SK-N-SH (cell line): ENCODE measurements at regions of chr11 and their contacts with region 1.

Region 1: GRCh38 chr11:74388678-74389327 is 9.4 kb downstream of the PGM2L1 start:
- DNase-seq: peak; percentile 59
- H3K4me3 ChIP-seq: no peak overlapping the region; a peak in 1 of 4 replicates
- H3K27ac ChIP-seq: no peak overlapping the region
- H3K4me1 ChIP-seq: peaks cover 3 to 9% of the 10 kb centered on the region in 2 experiments; a peak in 3 of 4 replicates
- H3K27me3 ChIP-seq: no peaks in the 10 kb centered on the region
- CTCF ChIP-seq: peak; percentile 90
- EP300 ChIP-seq: no peak
- RAD21 ChIP-seq: peak; percentile 73

Region 2: DNA sequence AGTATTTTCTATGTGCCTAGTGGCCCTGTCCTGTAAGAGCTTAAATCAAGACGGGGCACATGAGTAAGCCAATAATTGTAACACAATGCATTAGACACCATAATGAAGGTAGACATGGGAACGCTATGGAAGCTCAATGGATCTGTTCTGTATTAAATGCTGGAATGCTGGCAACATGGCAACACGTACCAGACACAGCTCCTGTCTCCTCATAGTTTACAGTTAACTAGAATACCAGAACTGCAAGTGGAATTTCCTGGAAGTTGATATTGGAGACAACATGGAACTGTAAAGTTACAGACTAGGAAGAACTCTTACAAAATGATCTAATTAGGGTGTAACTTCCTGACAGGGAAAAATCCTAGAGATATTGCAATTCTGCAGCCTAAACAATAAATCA is 89.8 kb before region 1 on chr11:
- CTCF ChIA-PET with region 1: no interaction called
- POLR2A ChIA-PET with region 1: no interaction called
- DNase-seq: no peak
- H3K4me3 ChIP-seq: no peak overlapping the region
- H3K27ac ChIP-seq: peak overlapping the region in 1 of 2 experiments; percentile 62; a peak in 1 of 4 replicates
- H3K4me1 ChIP-seq: no peaks in the 10 kb centered on the region; a peak in 1 of 4 replicates
- H3K27me3 ChIP-seq: no peaks in the 10 kb centered on the region
- CTCF ChIP-seq: no peak
- EP300 ChIP-seq: no peak
- RAD21 ChIP-seq: no peak

Region 3: GRCh38 chr11:74371279-74372049 is 17.3 kb before region 1 on chr11:
- CTCF ChIA-PET with region 1: interaction called, 10 read pairs
- POLR2A ChIA-PET with region 1: no interaction called
- DNase-seq: no peak
- H3K4me3 ChIP-seq: no peak overlapping the region
- H3K27ac ChIP-seq: peak overlapping the region in 1 of 2 experiments; percentile 22; a peak in 1 of 4 replicates
- H3K4me1 ChIP-seq: peaks cover 3 to 26% of the 10 kb centered on the region in 2 experiments; a peak in 3 of 4 replicates
- H3K27me3 ChIP-seq: no peaks in the 10 kb centered on the region
- CTCF ChIP-seq: no peak
- EP300 ChIP-seq: no peak
- RAD21 ChIP-seq: no peak